ENCODE measurements at regions of chr11 and their contacts with region 1.

Region 1: GRCh38 chr11:14358729-14359439 is at the start of gene RRAS2:
- DNase-seq: peak; percentile 77
- ATAC-seq: peak; percentile 90
- H3K4me3 Mint-ChIP-seq: peak within 1 kb of the TSS; percentile 89
- H3K27ac Mint-ChIP-seq: peak within 1 kb of the TSS; percentile 81
- H3K4me1 Mint-ChIP-seq: peaks cover 44% of the 10 kb centered on the region
- H3K27me3 Mint-ChIP-seq: no peaks in the 10 kb centered on the region
- CTCF ChIP-seq: no peak
- total RNA-seq, gene RRAS2: 97.7 and 106 TPM in 2 replicates

Region 2: DNA sequence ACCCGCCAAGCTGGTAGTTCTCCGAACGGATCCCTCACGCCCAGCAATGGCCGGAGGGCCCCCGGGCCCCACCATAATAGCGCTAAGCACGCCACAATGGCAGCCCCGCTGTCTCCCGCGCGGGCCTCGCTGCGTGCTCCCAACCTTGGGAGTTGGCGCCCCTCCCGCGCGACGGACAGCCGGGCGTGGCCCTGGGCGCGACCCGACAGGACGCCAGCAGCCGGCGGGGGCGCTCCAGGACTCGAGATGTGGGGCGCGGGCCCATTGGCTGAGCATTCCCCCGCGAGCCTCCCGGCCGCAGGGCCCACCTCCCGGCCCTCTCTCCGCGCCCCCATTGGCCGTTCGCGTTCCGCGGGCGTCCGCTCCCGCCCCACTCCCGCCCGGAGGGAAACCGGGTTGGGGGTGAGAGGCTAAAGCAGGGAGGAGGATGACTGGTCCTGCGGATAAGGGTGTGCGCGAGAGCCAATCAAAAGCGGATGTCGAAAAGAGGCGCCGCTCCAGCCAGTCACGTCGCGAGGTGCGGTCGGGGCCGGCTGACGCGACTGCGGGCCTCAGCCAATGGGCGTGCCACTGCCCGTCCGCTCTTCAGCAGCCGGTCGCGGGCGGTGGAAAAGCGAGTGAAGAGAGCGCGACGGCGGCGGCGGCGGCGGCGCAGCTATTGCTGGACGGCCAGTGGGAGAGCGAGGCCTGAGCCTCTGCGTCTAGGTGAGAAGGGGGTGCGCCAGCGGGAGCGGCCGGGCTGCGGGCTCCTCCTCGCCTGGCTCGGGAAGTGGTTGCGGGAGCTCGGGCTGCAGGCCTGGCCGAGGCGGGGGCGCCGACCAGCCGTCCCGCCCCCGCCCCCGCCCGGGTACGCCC is 690.6 kb before region 1 on chr11 and contains the start of gene FAR1:
- CTCF ChIA-PET with region 1: no interaction called
- POLR2A ChIA-PET with region 1: no interaction called
- intact Hi-C with region 1: loop called (anchors 1 kb)
- DNase-seq: peak; percentile 93
- ATAC-seq: peak; percentile 91
- H3K4me3 Mint-ChIP-seq: peak within 1 kb of the TSS; percentile 99
- H3K27ac Mint-ChIP-seq: peak within 1 kb of the TSS; percentile 95
- H3K4me1 Mint-ChIP-seq: peaks cover 44% of the 10 kb centered on the region
- H3K27me3 Mint-ChIP-seq: peaks cover 7% of the 10 kb centered on the region
- CTCF ChIP-seq: no peak
- total RNA-seq, gene FAR1: 39.2 and 48.4 TPM in 2 replicates

Region 3: DNA sequence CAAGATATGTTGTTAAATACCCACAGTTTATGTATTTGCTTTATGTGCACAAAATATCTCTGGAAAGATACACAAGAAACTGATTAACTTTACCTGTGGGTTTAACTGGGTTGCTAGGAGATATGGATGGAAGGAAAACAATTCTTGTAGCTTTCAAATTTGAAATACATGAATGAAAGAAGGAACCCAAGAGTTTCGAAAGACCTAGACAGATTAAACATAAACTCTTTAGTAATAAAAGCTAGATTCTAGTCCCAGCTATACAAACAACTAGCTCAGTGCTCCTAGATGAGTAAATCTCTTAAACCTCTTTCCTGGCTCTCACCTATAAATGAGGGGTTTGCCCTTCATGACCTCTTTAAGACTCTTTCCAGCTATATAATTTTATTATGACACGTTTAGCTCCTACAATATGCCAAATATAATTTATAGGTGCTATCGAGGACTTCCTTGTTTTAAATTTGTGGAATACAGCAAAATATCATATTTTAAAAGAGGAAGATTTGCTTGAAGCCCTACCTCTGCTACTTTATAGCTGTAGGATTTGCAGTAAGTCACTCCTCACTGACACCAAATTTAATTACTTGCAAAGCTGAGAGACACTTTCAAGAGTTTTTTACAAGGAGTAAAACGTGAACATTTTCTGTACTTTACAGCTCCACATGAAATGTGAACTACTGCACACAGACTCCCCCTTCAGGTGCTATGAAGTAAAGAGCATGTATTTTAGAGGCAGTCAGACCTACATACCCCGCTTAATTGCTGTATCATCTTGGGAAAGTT is 50.6 kb before region 1 on chr11:
- CTCF ChIA-PET with region 1: interaction called, 7 read pairs
- POLR2A ChIA-PET with region 1: interaction called, 23 read pairs
- intact Hi-C with region 1: loop called (anchors 1 kb)
- DNase-seq: no peak
- ATAC-seq: peak; percentile 51
- H3K4me3 Mint-ChIP-seq: no peak overlapping the region
- H3K27ac Mint-ChIP-seq: no peak overlapping the region
- H3K4me1 Mint-ChIP-seq: peaks cover 43% of the 10 kb centered on the region
- H3K27me3 Mint-ChIP-seq: no peaks in the 10 kb centered on the region
- CTCF ChIP-seq: peak; percentile 58

Region 4: GRCh38 chr11:14331476-14332136 is 27.3 kb before region 1 on chr11:
- CTCF ChIA-PET with region 1: no interaction called
- POLR2A ChIA-PET with region 1: interaction called, 4 read pairs
- intact Hi-C with region 1: loop called (anchors 1 kb)
- DNase-seq: no peak
- ATAC-seq: peak; percentile 82
- H3K4me3 Mint-ChIP-seq: peak overlapping the region; percentile 63
- H3K27ac Mint-ChIP-seq: peak overlapping the region; percentile 87
- H3K4me1 Mint-ChIP-seq: peaks cover 81% of the 10 kb centered on the region
- H3K27me3 Mint-ChIP-seq: no peaks in the 10 kb centered on the region
- CTCF ChIP-seq: no peak

Region 5: DNA sequence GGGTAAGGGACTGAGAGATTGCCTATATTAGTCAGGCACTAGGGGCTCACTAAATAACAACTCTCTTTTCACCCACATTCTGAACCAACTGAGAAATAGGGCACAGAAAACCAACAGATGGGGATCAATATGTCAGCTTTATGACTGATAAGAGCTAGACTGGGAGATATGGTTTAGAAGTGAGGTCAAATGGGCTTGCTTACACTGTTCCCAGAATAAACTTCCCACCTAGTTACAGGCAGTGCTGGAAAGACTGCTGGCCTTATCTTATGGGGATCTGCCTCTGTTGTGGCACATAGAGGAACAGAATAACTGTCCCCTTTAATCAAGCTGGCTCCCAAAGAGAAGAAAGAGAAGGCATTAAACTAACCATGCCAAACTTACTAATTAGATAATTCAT is 10.7 kb after region 1 on chr11:
- CTCF ChIA-PET with region 1: no interaction called
- POLR2A ChIA-PET with region 1: interaction called, 6 read pairs
- intact Hi-C with region 1: loop called (anchors 1 kb)
- DNase-seq: no peak
- ATAC-seq: no peak
- H3K4me3 Mint-ChIP-seq: no peak overlapping the region
- H3K27ac Mint-ChIP-seq: peak overlapping the region; percentile 46
- H3K4me1 Mint-ChIP-seq: peaks cover 25% of the 10 kb centered on the region
- H3K27me3 Mint-ChIP-seq: no peaks in the 10 kb centered on the region
- CTCF ChIP-seq: no peak

Region 6: DNA sequence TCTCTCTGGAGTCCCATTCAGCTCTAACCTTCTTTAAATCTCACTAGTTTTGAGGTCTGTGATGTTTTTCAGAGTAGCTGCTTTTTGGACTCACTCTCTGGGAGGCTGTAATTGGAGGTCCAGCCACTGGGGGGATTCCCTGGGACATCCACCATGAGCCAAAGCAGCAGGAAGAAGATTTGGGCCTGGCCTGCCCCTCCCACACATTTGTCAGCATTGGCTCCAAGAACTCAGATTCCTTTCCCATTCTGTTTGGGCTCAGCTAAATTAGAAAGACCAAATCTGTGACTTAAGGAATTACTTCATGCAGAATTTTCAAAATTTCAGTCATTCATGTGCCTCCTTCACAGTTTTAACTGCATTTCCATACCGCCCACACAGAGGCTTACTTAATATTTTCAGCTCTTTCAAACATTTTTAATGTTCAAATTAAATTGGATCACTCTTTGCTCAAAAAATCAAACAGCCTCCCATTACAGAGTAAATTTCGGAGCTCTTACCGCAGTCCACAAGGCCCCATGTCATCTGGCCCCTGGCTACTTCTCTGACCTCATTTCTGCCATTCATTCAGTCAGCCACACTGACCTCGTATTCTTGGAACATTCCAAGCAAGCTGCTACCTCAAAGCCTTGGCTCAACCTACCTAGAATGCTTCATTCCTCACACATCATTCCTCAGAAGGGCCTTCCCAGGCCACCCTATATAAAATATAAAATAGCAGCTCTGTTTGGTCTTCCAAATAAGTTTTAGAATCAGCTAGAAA is 54.6 kb after region 1 on chr11:
- CTCF ChIA-PET with region 1: no interaction called
- POLR2A ChIA-PET with region 1: interaction called, 6 read pairs
- intact Hi-C with region 1: loop called (anchors 2 kb)
- DNase-seq: no peak
- ATAC-seq: no peak
- H3K4me3 Mint-ChIP-seq: no peak overlapping the region
- H3K27ac Mint-ChIP-seq: no peak overlapping the region
- H3K4me1 Mint-ChIP-seq: peaks cover 22% of the 10 kb centered on the region
- H3K27me3 Mint-ChIP-seq: no peaks in the 10 kb centered on the region
- CTCF ChIP-seq: no peak

Region 7: GRCh38 chr11:14423633-14424032 is 64.7 kb after region 1 on chr11:
- CTCF ChIA-PET with region 1: no interaction called
- POLR2A ChIA-PET with region 1: no interaction called
- intact Hi-C with region 1: no loop called
- DNase-seq: no peak
- ATAC-seq: no peak
- H3K4me3 Mint-ChIP-seq: no peak overlapping the region
- H3K27ac Mint-ChIP-seq: no peak overlapping the region
- H3K4me1 Mint-ChIP-seq: peaks cover 4% of the 10 kb centered on the region
- H3K27me3 Mint-ChIP-seq: no peaks in the 10 kb centered on the region
- CTCF ChIP-seq: no peak

Region 8: GRCh38 chr11:14927146-14927545 is 568.3 kb after region 1 on chr11:
- CTCF ChIA-PET with region 1: no interaction called
- POLR2A ChIA-PET with region 1: no interaction called
- intact Hi-C with region 1: no loop called
- DNase-seq: no peak
- ATAC-seq: no peak
- H3K4me3 Mint-ChIP-seq: no peak overlapping the region
- H3K27ac Mint-ChIP-seq: no peak overlapping the region
- H3K4me1 Mint-ChIP-seq: no peaks in the 10 kb centered on the region
- H3K27me3 Mint-ChIP-seq: peaks cover 11% of the 10 kb centered on the region
- CTCF ChIP-seq: no peak